Endothelial cell of umbilical vein (primary cell): ENCODE measurements at regions of chr2 and their contacts with region 1.

Region 1: DNA sequence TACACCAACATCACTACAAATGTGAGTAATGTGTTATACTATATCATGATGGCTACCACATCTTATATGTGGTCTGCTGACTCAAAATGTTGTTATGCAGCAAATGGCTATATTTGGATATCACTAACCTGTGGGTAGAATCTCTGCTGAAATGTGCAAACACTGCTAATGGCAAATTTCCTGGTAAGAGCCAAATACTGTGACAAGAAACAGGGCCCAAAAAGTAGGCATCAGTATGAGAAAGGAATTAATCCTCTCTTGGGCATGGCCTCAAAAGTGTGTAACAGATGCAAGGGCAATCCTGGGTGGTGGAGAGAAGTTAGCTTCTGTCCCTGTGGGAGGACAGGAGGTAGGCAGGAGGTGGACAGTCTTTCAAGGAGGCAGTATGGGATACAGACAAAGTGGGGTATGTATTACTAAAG is 13.3 kb downstream of the ATF2 start:
- DNase-seq: no peak
- H3K4me3 ChIP-seq: no peak overlapping the region
- H3K27ac ChIP-seq: peak overlapping the region; percentile 11
- H3K4me1 ChIP-seq: peaks cover 18% of the 10 kb centered on the region
- H3K27me3 ChIP-seq: no peaks in the 10 kb centered on the region
- CTCF ChIP-seq: no peak
- POLR2A ChIP-seq: no peak

Region 2: GRCh38 chr2:175074478-175074877 is 80.2 kb before region 1 on chr2:
- CTCF ChIA-PET with region 1: no interaction called
- POLR2A ChIA-PET with region 1: no interaction called
- dilution Hi-C with region 1: no loop called
- intact Hi-C with region 1: no loop called
- DNase-seq: no peak
- H3K4me3 ChIP-seq: no peak overlapping the region
- H3K27ac ChIP-seq: no peak overlapping the region
- H3K4me1 ChIP-seq: no peaks in the 10 kb centered on the region
- H3K27me3 ChIP-seq: no peaks in the 10 kb centered on the region
- CTCF ChIP-seq: no peak
- POLR2A ChIP-seq: no peak

Region 3: GRCh38 chr2:175136334-175137215 is 18.1 kb before region 1 on chr2:
- CTCF ChIA-PET with region 1: interaction called, 11 read pairs
- POLR2A ChIA-PET with region 1: no interaction called
- dilution Hi-C with region 1: no loop called
- intact Hi-C with region 1: no loop called
- DNase-seq: no peak
- H3K4me3 ChIP-seq: no peak overlapping the region
- H3K27ac ChIP-seq: no peak overlapping the region
- H3K4me1 ChIP-seq: no peaks in the 10 kb centered on the region
- H3K27me3 ChIP-seq: no peaks in the 10 kb centered on the region
- CTCF ChIP-seq: no peak
- POLR2A ChIP-seq: no peak

Region 4: GRCh38 chr2:175175896-175176295 is 21.2 kb after region 1 on chr2:
- CTCF ChIA-PET with region 1: no interaction called
- POLR2A ChIA-PET with region 1: no interaction called
- dilution Hi-C with region 1: no loop called
- intact Hi-C with region 1: no loop called
- DNase-seq: no peak
- H3K4me3 ChIP-seq: no peak overlapping the region
- H3K27ac ChIP-seq: no peak overlapping the region
- H3K4me1 ChIP-seq: no peaks in the 10 kb centered on the region
- H3K27me3 ChIP-seq: no peaks in the 10 kb centered on the region
- CTCF ChIP-seq: no peak
- POLR2A ChIP-seq: no peak

Region 5: GRCh38 chr2:175463589-175464310 is 309.1 kb after region 1 on chr2:
- CTCF ChIA-PET with region 1: no interaction called
- POLR2A ChIA-PET with region 1: no interaction called
- dilution Hi-C with region 1: no loop called
- intact Hi-C with region 1: no loop called
- DNase-seq: no peak
- H3K4me3 ChIP-seq: no peak overlapping the region
- H3K27ac ChIP-seq: no peak overlapping the region
- H3K4me1 ChIP-seq: no peaks in the 10 kb centered on the region
- H3K27me3 ChIP-seq: no peaks in the 10 kb centered on the region
- CTCF ChIP-seq: no peak
- POLR2A ChIP-seq: no peak